ENCODE measurements at regions of chr18 and their contacts with region 1.

Region 1: DNA sequence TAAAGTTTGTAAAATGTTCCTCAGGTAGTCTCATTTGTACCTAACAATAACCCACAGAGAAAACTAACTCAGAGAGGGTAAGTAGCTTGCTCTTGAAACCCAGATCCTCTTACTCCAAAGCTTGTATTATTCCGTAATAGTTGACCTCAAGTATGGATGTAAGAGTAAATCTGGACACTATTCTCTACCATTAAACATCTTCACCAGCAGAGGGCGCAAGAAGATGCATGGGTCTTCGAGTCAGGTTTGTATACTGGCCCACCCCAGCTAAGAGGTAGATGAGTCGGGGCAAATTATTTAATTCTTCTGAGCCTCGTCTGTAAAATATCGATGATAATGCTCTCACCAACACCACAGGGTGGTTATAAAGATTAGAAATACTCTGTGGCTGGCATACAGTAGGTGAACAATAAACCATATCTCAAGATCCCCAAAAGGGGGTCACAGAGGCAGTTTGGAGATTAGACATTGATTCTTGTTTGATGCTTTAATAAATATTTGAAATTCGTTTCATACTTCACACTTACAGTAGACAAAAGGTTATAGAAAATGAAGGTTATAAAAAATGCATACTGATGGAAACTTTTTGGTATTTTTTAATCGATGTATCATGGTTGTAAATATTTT is 3.5 kb upstream of the CABLES1 start:
- DNase-seq: peak; percentile 26

Region 2: GRCh38 chr18:23032030-23032582 is 99.7 kb before region 1 on chr18:
- intact Hi-C with region 1: loop called in 1 of 2 experiments (anchors 10 kb)
- DNase-seq: no peak

Region 3: GRCh38 chr18:23231340-23232021 is 99.7 kb after region 1 on chr18:
- intact Hi-C with region 1: loop called in 1 of 2 experiments (anchors 5 kb)
- DNase-seq: peak; percentile 87

Region 4: DNA sequence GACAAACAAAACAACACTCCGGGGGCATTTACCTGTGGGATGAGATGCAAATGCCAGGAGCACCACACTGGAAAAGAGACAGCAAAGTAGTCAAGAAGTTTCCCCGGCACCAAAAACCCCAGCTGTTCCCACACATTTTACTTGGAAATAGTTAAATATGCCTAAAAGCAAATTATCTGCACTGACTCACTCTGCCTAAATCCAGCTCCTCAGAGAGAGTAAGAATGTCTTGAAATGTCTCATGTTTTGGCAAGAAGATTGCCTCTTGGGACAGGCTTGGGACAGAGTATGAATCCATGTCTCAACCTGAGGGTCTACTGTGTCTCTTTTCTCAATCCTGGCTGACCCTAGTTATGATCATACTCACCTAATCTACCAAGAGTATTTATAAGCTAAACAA is 233.8 kb after region 1 on chr18:
- intact Hi-C with region 1: loop called (anchors 5 to 10 kb)
- DNase-seq: no peak

Measured in posterior vena cava (tissue), 2 donors.